Naive thymus-derived CD8-positive, alpha-beta T cell (primary cell): ENCODE measurements at regions of chr15 and their contacts with region 1.

Region 1: GRCh38 chr15:101376615-101377395 is 81.8 kb upstream of the SNRPA1 start:
- DNase-seq: peak in 4 of 10 donors; percentile 15 to 62 (median 38)
- ATAC-seq: peak; percentile 81 to 86
- H3K4me3 Mint-ChIP-seq: peak overlapping the region in 9 of 10 donors; percentile 17 to 78 (median 56)
- H3K27ac Mint-ChIP-seq: peak overlapping the region; percentile 21 to 94 (median 81)
- H3K4me1 Mint-ChIP-seq: peaks cover 13 to 66% (median 30%) of the 10 kb centered on the region in 4 donors
- H3K27me3 Mint-ChIP-seq: peaks cover 0 to 4% (median 2%) of the 10 kb centered on the region in 5 donors

Region 2: DNA sequence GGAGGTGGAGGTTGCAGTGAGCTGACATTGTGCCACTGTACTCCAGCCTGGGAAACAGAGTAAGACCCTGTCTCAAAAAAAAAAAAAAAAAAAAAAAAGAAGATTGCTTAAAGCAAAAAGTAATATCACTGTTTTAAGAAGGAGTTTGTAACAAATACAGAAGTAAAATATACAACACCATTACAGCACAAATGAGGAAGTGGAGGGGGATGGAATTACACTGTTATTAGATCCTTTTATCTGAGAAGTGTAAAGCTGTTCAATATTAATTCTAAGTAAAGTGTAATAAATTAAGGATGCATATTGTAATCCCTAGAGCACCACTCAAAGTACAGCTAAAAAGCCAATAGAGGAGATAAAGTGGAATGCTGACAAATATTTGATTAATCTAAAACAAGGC is 34.7 kb before region 1 on chr15:
- POLR2A ChIA-PET with region 1: no interaction called
- DNase-seq: no peak
- ATAC-seq: no peak
- H3K4me3 Mint-ChIP-seq: no peak overlapping the region
- H3K27ac Mint-ChIP-seq: no peak overlapping the region
- H3K4me1 Mint-ChIP-seq: no peaks in the 10 kb centered on the region
- H3K27me3 Mint-ChIP-seq: peaks cover 9 to 36% (median 17%) of the 10 kb centered on the region in 5 donors

Region 3: GRCh38 chr15:101359365-101359947 is 17.3 kb before region 1 on chr15:
- POLR2A ChIA-PET with region 1: no interaction called
- DNase-seq: no peak
- ATAC-seq: no peak
- H3K4me3 Mint-ChIP-seq: no peak overlapping the region
- H3K27ac Mint-ChIP-seq: peak overlapping the region in 1 of 10 donors; percentile 73
- H3K4me1 Mint-ChIP-seq: peaks cover 1 to 24% (median 3%) of the 10 kb centered on the region in 4 donors
- H3K27me3 Mint-ChIP-seq: peaks cover 0 to 19% (median 6%) of the 10 kb centered on the region in 5 donors

Region 4: DNA sequence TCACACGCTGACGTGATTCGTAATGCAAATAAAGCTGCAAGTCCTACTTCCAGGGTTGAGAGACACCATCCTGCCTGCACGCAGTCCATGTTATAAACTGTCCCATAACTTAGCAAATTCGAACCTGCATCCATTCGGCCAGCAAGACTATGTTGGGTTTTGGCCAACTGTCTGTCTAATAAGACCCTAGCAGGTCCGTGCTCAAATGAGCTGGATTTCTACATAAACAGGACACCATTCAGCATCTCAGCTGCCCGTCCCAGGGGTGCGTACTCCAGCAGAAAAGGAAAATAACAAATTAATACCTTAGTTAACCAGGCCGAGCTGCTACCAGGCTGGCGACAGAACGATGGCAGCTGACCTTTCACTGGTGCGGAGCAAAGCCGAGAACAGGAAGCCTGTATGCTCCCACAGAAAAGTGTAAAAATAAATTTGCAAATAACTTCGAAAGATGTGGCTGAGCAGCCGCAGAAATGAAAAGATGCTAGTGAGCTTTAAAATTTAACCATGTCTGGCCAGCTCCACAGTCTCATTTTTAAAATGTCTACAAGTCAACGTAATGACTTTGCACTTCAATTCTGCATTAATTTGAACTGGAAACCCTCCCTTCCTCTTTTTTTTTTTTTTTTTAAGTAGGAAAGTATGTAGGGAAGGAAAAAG is 15.3 kb after region 1 on chr15:
- POLR2A ChIA-PET with region 1: interaction called, 21 read pairs
- DNase-seq: no peak
- ATAC-seq: no peak
- H3K4me3 Mint-ChIP-seq: peak overlapping the region in 2 of 10 donors; percentile 68 to 76
- H3K27ac Mint-ChIP-seq: peak overlapping the region in 4 of 10 donors; percentile 0 to 86 (median 20)
- H3K4me1 Mint-ChIP-seq: peaks cover 0 to 65% (median 10%) of the 10 kb centered on the region in 4 donors
- H3K27me3 Mint-ChIP-seq: peaks cover 0 to 15% (median 11%) of the 10 kb centered on the region in 5 donors